H1 (cell line): ENCODE measurements at regions of chr9 and their contacts with region 1.

Region 1: GRCh38 chr9:27539479-27540441 is 10.1 kb upstream of the MOB3B start:
- DNase-seq: no peak
- H3K4me3 ChIP-seq: no peak overlapping the region
- H3K27ac ChIP-seq: no peak overlapping the region
- H3K4me1 ChIP-seq: peaks cover 0 to 5% (median 0%) of the 10 kb centered on the region in 4 experiments; a peak in 2 of 7 replicates
- H3K27me3 ChIP-seq: no peaks in the 10 kb centered on the region
- CTCF ChIP-seq: no peak
- EP300 ChIP-seq: no peak
- POLR2A ChIP-seq: no peak
- RAD21 ChIP-seq: no peak

Region 2: DNA sequence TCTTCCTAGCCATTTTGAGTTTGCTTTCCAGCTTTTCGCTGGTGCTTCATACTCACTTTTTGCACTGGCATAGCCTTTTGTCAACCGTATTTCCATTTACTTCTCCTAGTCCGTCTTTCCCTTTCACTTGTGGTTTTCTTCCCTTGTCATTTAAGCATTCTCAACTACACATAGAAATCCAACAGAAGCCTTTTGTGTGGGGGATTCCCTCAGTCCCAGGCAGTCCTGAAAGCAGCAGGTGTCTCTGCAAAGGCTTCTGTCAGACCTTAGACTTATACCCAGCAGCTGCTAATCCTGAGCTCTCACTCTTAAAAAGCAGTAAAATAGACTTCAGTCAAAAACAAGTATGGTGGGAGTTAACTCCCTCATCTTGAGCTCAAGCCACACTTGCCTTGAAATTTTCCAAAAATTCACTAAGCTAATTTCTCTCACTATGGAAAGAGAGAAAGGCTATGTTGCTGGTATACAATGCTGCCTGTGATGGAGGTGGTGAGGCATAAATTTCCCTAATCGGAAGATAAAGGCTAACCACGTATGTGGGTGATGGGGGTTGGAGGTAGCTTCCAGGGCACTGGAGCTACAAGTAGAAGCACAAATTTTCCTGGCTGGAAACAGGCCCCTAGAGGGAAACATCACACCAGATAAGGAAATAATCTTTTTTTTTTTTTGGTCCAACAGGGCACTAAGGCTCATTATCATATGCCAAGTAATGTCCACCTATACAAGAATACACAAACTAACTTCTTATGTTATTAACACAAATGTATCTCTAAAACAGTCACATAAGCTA is 50.5 kb before region 1 on chr9:
- CTCF ChIA-PET with region 1: interaction called, 14 read pairs
- POLR2A ChIA-PET with region 1: no interaction called
- DNase-seq: no peak
- H3K4me3 ChIP-seq: peak overlapping the region in 2 of 4 experiments; percentile 2 to 28; a peak in 2 of 8 replicates
- H3K27ac ChIP-seq: peak overlapping the region; percentile 50; the same call in 1 of the 2 replicates
- H3K4me1 ChIP-seq: peaks cover 11 to 27% (median 18%) of the 10 kb centered on the region in 4 experiments; a peak in 6 of 7 replicates
- H3K27me3 ChIP-seq: no peaks in the 10 kb centered on the region
- CTCF ChIP-seq: peak in 1 of 3 experiments; percentile 3; a peak in 2 of 4 replicates
- EP300 ChIP-seq: no peak
- POLR2A ChIP-seq: no peak
- RAD21 ChIP-seq: peak; percentile 30 to 32; a peak in 2 of 4 replicates

Region 3: DNA sequence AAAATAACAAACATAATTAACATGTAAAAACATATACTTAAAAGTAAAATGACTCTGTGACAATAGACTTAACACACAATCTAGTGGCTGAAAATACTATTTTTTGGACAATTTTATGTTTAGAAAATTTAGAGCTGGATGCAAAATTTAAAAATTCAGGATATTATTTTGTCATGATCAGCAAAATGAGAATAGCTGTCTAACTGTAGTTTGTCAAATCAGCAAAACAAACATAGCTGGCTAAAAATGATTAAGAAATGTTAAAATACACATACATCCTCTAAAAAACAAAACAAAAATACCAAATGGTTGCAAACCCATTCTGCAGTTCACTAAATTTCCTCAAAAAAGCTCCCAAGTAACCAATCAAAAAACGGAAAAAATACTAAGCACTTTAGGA is 15.0 kb after region 1 on chr9:
- CTCF ChIA-PET with region 1: interaction called, 10 read pairs
- POLR2A ChIA-PET with region 1: interaction called, 5 read pairs
- DNase-seq: no peak
- H3K4me3 ChIP-seq: no peak overlapping the region
- H3K27ac ChIP-seq: no peak overlapping the region
- H3K4me1 ChIP-seq: no peaks in the 10 kb centered on the region
- H3K27me3 ChIP-seq: no peaks in the 10 kb centered on the region
- CTCF ChIP-seq: no peak
- EP300 ChIP-seq: no peak
- POLR2A ChIP-seq: no peak
- RAD21 ChIP-seq: no peak

Region 4: GRCh38 chr9:27664121-27664779 is 124.5 kb after region 1 on chr9:
- CTCF ChIA-PET with region 1: no interaction called
- POLR2A ChIA-PET with region 1: no interaction called
- DNase-seq: no peak
- H3K4me3 ChIP-seq: no peak overlapping the region
- H3K27ac ChIP-seq: no peak overlapping the region
- H3K4me1 ChIP-seq: peaks cover 0 to 10% (median 6%) of the 10 kb centered on the region in 4 experiments; a peak in 3 of 7 replicates
- H3K27me3 ChIP-seq: no peaks in the 10 kb centered on the region
- CTCF ChIP-seq: no peak
- EP300 ChIP-seq: no peak
- POLR2A ChIP-seq: no peak
- RAD21 ChIP-seq: no peak

Region 5: GRCh38 chr9:27743490-27743889 is 203.7 kb after region 1 on chr9:
- CTCF ChIA-PET with region 1: no interaction called
- POLR2A ChIA-PET with region 1: no interaction called
- DNase-seq: no peak
- H3K4me3 ChIP-seq: no peak overlapping the region
- H3K27ac ChIP-seq: no peak overlapping the region
- H3K4me1 ChIP-seq: peaks cover 0 to 6% (median 0%) of the 10 kb centered on the region in 4 experiments; a peak in 2 of 7 replicates
- H3K27me3 ChIP-seq: no peaks in the 10 kb centered on the region
- CTCF ChIP-seq: no peak
- EP300 ChIP-seq: no peak
- POLR2A ChIP-seq: no peak
- RAD21 ChIP-seq: no peak